Aorta (tissue), 5 donors: ENCODE measurements at regions of chr9 and their contacts with region 1.

Region 1: DNA sequence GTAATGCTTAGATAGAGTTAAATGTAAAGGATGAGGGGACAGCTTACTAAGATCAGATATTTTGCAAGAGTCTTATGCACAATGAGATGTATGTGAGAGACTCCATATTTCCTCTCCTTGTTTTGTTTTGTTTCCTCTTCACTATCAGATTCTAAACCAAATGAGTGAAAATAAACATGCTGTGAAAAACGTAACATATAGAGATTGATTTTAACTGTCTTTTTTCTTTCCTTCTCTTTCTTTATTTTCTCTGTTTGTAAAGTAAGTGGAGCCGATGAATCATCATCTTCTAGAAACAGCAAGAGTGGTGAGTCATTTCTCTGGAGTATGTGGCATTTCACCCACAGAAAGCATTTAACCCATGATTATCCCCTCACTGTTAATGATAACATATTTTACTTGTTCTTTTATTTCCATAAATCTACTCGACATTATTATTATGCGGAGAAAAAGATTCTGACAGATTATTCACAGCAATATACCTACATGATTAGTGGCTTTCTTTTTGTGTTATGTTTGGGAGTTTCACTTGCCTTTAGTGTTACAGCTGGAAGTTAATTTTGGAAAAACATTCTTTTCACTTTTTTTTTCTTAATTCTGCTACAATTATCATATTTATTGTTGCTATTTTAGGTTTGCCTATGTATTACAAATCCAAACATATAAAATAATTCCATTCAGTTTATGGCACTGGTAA is 2.1 kb upstream of the ANXA1 start:
- DNase-seq: no peak
- ATAC-seq: peak; percentile 76
- H3K4me3 ChIP-seq: peak overlapping the region in 1 of 2 donors; percentile 26
- H3K27ac ChIP-seq: no peak overlapping the region
- H3K4me1 ChIP-seq: peaks cover under 1 to 2% of the 10 kb centered on the region in 2 donors
- H3K27me3 ChIP-seq: no peaks in the 10 kb centered on the region

Region 2: GRCh38 chr9:73093740-73094379 is 55.7 kb before region 1 on chr9:
- intact Hi-C with region 1: no loop called
- DNase-seq: no peak
- ATAC-seq: peak; percentile 71
- H3K4me3 ChIP-seq: peak overlapping the region; percentile 43 to 59
- H3K27ac ChIP-seq: peak overlapping the region in 1 of 2 donors; percentile 67
- H3K4me1 ChIP-seq: peaks cover 0 to 3% of the 10 kb centered on the region in 2 donors
- H3K27me3 ChIP-seq: no peaks in the 10 kb centered on the region

Region 3: DNA sequence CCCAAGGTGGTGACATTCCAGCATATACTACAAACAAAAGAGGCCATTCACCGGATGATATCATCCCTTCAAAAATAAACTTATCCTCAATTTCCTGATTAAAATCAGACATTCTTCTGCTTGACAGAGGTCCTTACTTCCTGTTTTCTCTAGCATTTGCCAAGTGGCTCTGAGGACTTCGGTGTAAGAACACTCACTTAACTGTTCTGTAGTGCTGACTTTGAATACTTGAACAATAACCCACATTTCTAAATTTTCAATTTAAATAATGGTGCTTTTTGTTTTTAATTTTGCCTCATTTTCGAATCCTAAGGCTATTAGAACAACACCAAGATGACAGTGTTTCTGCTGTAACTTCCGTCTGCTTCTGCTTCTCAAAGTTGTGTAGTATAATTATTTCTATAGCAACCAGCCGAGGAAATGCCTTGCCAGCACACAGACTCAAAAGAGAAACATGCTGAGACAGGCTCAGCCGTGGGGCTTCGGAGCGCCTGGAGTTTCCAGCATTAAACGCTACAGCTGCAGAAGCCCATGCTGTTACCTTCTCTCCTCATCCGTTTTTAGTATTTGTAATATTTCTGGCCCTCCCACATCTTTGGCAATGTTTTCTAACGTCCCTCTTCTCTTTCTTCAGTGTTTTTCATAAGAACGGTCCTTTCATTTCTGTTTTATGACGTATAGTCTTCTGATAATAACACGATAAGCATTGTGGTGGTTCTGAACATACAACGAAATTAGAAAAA is 17.3 kb before region 1 on chr9:
- intact Hi-C with region 1: loop called in 1 of 2 experiments (anchors 2 kb)
- DNase-seq: peak; percentile 84 to 86
- ATAC-seq: peak; percentile 92
- H3K4me3 ChIP-seq: peak overlapping the region; percentile 43 to 98
- H3K27ac ChIP-seq: peak overlapping the region; percentile 57 to 90
- H3K4me1 ChIP-seq: no peaks in the 10 kb centered on the region
- H3K27me3 ChIP-seq: no peaks in the 10 kb centered on the region